Activated CD8-positive, alpha-beta T cell treated with anti-CD3 and anti-CD28 coated beads for 36 hours (primary cell): ENCODE measurements at regions of chr9 and their contacts with region 1.

Region 1: GRCh38 chr9:32384364-32385151 is at the start of gene ACO1:
- DNase-seq: peak; percentile 83
- ATAC-seq: peak; percentile 97
- H3K4me3 Mint-ChIP-seq: peak within 1 kb of the TSS; percentile 81
- H3K27ac Mint-ChIP-seq: no peak within 1 kb of the TSS
- H3K4me1 Mint-ChIP-seq: peaks cover 17% of the 10 kb centered on the region
- H3K27me3 Mint-ChIP-seq: peaks cover 12% of the 10 kb centered on the region
- CTCF ChIP-seq: no peak
- total RNA-seq, gene ACO1: 15.3 to 15.7 TPM

Region 2: DNA sequence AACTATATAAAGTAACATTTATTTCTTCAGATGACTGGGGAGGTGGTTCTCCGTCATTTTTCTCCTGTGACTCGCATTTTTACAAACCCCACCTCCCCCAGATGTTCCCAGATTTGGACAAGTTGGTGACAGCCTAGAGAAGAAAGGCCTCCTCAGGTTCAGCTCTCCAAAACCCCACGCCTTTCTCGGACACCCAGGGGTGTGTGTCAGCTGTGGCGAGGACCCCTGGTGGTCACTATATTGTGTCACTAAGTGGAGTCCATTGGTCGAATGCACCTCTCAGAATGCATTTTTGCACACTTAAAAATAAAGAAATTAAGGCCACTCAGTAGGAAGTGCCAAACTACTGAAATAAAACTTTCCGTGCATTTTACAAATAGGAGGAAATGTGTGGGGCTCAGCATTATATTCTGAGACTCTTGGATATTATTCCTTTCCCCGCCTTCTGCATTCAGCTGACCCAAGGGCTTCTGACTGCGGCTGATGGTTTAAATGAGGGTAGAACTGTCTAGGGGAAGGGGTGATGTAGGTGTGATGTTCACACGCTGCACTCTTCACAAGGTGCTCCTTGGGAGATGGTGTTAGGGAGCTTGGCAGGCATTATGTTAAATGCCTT is 47.5 kb after region 1 on chr9:
- CTCF ChIA-PET with region 1: interaction called, 111 read pairs
- POLR2A ChIA-PET with region 1: no interaction called
- intact Hi-C with region 1: loop called (anchors 2 kb)
- DNase-seq: peak; percentile 54
- ATAC-seq: peak; percentile 60
- H3K4me3 Mint-ChIP-seq: no peak overlapping the region
- H3K27ac Mint-ChIP-seq: no peak overlapping the region
- H3K4me1 Mint-ChIP-seq: peaks cover 2% of the 10 kb centered on the region
- H3K27me3 Mint-ChIP-seq: no peaks in the 10 kb centered on the region
- CTCF ChIP-seq: peak; percentile 33